CD8-positive, alpha-beta T cell (primary cell): ENCODE measurements at regions of chr11 and their contacts with region 1.

Region 1: GRCh38 chr11:26730414-26731080 is 8.7 kb upstream of the SLC5A12 start:
- DNase-seq: no peak
- ATAC-seq: no peak
- H3K4me3 ChIP-seq: no peak overlapping the region
- H3K4me3 Mint-ChIP-seq: no peak overlapping the region
- H3K27ac ChIP-seq: no peak overlapping the region
- H3K27ac Mint-ChIP-seq: no peak overlapping the region
- H3K4me1 ChIP-seq: no peaks in the 10 kb centered on the region
- H3K4me1 Mint-ChIP-seq: no peaks in the 10 kb centered on the region
- H3K27me3 ChIP-seq: no peaks in the 10 kb centered on the region
- H3K27me3 Mint-ChIP-seq: no peaks in the 10 kb centered on the region
- CTCF ChIP-seq: no peak

Region 2: DNA sequence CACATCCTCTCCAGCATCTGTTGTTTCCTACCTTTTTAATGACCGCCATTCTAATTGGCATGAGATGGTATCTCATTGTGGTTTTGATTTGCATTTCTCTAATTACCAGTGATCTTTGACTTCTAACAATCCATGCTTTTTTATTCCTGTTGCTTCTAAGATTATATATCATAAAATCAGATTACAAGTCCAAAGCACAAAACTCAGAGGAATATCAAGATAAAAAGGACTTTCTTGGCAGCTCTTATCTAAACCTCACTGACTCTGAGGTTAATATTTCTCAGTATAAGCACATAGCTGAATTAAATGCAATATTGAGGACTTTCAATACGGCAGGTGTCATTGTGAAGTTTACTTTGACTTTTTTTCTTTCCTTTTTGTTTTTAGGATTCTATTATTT is 20.1 kb before region 1 on chr11:
- CTCF ChIA-PET with region 1: no interaction called
- POLR2A ChIA-PET with region 1: no interaction called
- intact Hi-C with region 1: loop called in 1 of 2 experiments (anchors 2 kb)
- DNase-seq: no peak
- ATAC-seq: no peak
- H3K4me3 ChIP-seq: no peak overlapping the region
- H3K4me3 Mint-ChIP-seq: no peak overlapping the region
- H3K27ac ChIP-seq: no peak overlapping the region
- H3K27ac Mint-ChIP-seq: no peak overlapping the region
- H3K4me1 ChIP-seq: no peaks in the 10 kb centered on the region
- H3K4me1 Mint-ChIP-seq: no peaks in the 10 kb centered on the region
- H3K27me3 ChIP-seq: no peaks in the 10 kb centered on the region
- H3K27me3 Mint-ChIP-seq: no peaks in the 10 kb centered on the region
- CTCF ChIP-seq: no peak

Region 3: GRCh38 chr11:26931248-26931631 is 200.7 kb after region 1 on chr11:
- CTCF ChIA-PET with region 1: no interaction called
- POLR2A ChIA-PET with region 1: no interaction called
- intact Hi-C with region 1: no loop called
- DNase-seq: no peak
- ATAC-seq: no peak
- H3K4me3 ChIP-seq: no peak overlapping the region
- H3K4me3 Mint-ChIP-seq: no peak overlapping the region
- H3K27ac ChIP-seq: no peak overlapping the region
- H3K27ac Mint-ChIP-seq: no peak overlapping the region
- H3K4me1 ChIP-seq: no peaks in the 10 kb centered on the region
- H3K4me1 Mint-ChIP-seq: no peaks in the 10 kb centered on the region
- H3K27me3 ChIP-seq: no peaks in the 10 kb centered on the region
- H3K27me3 Mint-ChIP-seq: no peaks in the 10 kb centered on the region
- CTCF ChIP-seq: no peak